ENCODE measurements at regions of chr15 and their contacts with region 1.

Region 1: DNA sequence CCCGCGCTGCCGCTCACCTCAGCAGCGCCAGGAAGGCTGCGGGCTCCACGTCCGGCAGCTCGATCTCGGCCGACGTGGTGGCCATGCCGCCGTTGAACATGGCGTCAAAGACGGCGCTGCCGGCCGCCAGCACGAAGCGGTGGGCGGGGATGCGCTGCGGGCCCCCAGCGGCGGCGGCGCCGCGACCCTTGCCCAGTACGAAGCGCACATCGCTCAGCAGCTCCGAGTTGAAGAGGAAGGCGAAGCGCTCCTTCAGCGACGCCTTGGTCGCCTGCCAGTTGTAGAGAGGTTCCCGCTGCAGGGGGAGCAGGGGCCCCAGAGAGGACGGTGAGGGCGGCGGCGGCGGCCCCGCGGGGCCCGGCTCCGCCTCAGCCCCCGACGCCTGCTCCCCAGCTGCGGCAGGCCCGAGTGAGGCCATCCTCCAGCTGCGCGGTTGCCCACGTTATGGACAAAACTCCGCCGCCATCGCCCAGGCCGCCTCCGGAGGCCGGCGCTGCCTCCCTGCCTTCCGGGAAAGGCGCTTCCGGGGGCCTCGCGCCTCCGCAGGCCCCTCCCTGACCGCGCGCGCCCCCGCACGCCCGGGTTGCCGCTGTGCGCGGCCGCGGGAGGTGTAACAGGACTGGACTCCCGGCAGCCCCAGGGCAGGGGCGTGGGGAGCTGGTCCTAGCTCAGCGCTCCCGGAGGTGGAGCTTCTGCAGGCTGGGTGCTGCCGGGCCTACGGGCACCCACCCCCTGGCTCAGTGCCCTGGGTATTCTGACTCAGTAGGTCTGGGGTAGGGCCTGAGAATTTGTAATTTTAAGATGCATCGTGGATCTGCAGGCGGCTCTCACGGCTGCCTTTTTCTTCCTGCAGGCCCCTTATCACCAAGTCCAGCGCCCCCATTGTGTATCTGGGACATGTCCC is at the start of gene BTBD1:
- DNase-seq: peak; percentile 69 to 96 (median 89)

Region 2: DNA sequence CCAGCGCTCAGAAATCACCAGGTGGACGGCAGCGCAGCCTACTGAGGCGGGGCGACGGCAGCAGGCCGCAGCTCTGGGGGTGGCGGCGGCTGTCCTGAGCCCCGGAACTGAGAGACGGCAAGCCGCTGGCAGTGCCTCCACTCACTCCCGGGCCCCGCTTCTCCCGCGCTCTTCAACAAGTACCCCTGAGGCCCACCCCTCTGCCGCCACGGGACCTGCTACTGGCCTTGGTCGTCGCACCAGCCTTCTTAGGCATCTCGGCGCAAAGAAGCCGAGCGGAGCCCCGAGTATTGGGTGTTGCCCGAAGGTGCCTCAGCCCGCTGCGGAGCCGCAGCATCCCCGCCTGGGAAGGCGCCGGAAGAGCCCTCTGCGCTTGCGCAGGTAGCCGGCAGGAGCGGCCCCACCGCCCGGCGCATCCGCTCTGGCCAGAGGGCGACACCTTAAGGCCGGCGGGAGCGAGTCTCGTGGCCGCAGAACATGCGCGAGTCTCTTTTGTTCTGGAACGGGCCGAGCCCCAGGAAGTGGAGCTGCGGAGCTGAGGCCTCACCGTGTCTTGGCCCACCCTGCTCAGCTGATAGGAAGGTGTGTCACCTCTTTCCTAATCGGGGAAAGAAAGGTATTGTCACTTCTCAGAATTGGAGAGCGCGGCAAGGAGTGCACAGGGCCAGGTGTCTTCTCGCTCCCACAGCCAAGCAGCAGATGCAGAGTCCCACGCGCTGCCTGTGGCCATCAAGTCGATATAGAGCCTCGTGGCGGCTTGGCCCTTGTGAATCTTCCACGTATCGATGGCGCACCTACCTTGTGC is 55.5 kb before region 1 on chr15 and contains the start of gene C15orf40:
- intact Hi-C with region 1: loop called (anchors 5 kb)
- DNase-seq: peak; percentile 81 to 97 (median 92)

Region 3: DNA sequence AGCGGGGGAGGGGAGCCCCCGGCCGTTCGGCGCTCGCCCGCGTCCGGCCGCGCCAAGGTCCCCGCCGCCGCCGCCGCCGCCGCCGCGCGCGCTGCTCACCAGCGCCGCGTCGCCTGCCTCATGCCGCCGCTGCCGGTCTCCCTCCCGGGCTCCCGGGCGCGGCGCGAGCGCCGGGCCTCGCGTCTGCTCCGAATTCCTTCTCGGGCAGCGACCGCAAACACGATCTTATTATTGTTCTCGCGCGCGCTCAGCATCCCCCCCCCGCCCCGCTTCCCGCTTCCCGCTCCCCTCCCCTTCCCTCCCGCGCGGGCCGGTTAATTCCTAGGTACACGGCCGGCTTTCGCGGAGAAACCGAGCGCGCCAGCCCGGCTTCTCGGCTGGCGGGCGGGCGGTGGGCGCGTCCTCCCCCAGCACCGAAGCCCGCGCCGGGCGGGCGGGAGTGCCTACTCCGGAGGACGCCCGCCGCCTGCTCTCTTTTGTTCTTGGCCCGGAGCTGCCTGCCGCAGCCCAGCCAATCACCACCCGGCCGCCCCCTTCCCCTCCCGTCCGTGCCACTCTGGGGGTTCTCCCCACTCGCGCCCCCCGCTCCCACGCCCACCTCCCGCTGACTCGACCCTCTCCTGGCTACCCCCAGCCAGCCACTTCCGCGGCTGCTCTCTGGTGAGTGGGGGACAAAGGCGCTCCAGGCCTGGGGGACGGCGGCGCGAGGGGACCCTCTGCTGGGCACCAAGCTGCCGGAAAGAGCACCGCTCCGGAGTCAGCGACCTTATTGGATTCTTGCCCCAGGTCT is 140.8 kb after region 1 on chr15 and contains the start of gene HDGFL3:
- intact Hi-C with region 1: loop called (anchors 5 kb)
- DNase-seq: peak; percentile 26 to 86 (median 70)

Region 4: DNA sequence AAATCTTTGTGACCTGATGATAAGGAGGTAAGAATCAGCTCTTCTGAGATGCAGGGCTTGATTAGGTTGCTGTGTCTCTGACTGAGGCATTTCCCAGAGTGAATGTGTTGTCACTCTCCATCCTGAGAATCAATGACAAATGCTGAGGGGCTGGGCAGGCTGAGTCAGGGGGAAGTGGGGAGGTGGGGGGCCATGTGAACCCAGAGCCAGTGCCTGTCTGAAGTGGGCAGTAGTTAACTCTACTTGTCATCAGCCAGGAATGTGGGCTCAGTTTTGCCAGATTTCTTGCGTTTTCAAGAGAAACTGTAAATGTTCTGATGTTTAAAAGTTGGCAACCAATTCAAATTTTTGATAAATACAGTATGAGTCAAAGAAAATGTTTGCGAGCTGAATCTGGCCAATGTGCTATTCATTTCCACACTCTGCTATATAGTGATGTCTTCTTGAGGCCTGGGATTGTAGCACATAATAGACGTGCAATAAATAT is 220.6 kb after region 1 on chr15:
- intact Hi-C with region 1: no loop called
- DNase-seq: no peak

Measured in head of caudate nucleus (tissue), 42 donors.